ENCODE measurements at regions of chr3 and their contacts with region 1.

Region 1: GRCh38 chr3:48472915-48473616 is 26.5 kb downstream of the ATRIP start:
- DNase-seq: peak; percentile 90
- H3K4me3 ChIP-seq: peak overlapping the region; percentile 52 to 98 (median 98)
- H3K27ac ChIP-seq: peak overlapping the region; percentile 95
- H3K4me1 ChIP-seq: peaks cover 10% of the 10 kb centered on the region
- H3K27me3 ChIP-seq: no peaks in the 10 kb centered on the region
- CTCF ChIP-seq: peak; percentile 34 to 56
- POLR2A ChIP-seq: peak; percentile 91

Region 2: DNA sequence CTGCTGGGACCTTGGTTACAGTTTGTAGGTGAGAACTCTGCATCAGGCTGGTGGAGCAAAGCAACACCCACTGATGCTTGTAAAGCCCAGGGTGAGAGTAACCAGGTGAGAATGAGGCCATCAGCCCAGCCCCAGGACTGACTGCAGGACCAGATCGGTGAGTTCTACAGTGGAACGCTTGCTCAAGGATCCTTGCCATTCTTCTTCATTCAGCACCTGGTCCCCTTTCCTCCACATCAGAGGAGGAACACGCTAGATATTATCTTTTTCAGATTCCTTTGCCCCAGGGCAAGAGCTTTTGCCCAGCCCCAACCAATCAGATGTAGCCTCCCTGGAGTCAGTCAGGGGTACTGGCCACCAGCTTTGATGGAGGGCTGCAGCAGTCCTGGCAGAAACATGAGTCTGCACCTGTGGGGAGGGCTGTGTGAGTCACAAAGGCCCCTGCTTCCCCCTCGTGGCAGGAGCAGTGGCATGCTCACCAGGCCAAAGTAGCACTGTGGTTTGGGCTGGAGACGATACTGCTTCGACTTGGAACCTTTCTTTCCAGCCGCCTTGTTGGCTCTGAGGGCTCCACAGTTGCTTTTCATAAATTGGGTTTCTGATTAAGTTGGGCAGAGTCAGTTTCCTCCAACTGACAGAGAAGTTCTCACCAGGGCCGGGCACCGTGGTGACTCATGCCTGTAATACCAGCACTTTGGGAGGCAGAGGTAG is 34.4 kb after region 1 on chr3:
- CTCF ChIA-PET with region 1: interaction called, 20 read pairs
- POLR2A ChIA-PET with region 1: interaction called, 8 read pairs
- dilution Hi-C with region 1: no loop called
- intact Hi-C with region 1: loop called (anchors 1 kb)
- DNase-seq: peak; percentile 72
- H3K4me3 ChIP-seq: no peak overlapping the region
- H3K27ac ChIP-seq: no peak overlapping the region
- H3K4me1 ChIP-seq: peaks cover 21% of the 10 kb centered on the region
- H3K27me3 ChIP-seq: no peaks in the 10 kb centered on the region
- CTCF ChIP-seq: peak; percentile 41 to 74
- POLR2A ChIP-seq: no peak

Measured in endothelial cell of umbilical vein (primary cell).